Activated CD4-positive, alpha-beta T cell treated with anti-CD3 and anti-CD28 coated beads for 36 hours (primary cell): ENCODE measurements at regions of chr13 and their contacts with region 1.

Region 1: GRCh38 chr13:96762876-96763275 is 231.4 kb downstream of the OXGR1 start:
- DNase-seq: no peak
- ATAC-seq: no peak
- H3K4me3 Mint-ChIP-seq: no peak overlapping the region
- H3K27ac Mint-ChIP-seq: no peak overlapping the region
- H3K4me1 Mint-ChIP-seq: no peaks in the 10 kb centered on the region
- H3K27me3 Mint-ChIP-seq: no peaks in the 10 kb centered on the region

Region 2: GRCh38 chr13:95698047-95698749 is 1064.7 kb before region 1 on chr13:
- CTCF ChIA-PET with region 1: no interaction called
- POLR2A ChIA-PET with region 1: no interaction called
- intact Hi-C with region 1: no loop called
- DNase-seq: no peak
- ATAC-seq: peak; percentile 51
- H3K4me3 Mint-ChIP-seq: no peak overlapping the region
- H3K27ac Mint-ChIP-seq: peak overlapping the region; percentile 27
- H3K4me1 Mint-ChIP-seq: peaks cover 49% of the 10 kb centered on the region
- H3K27me3 Mint-ChIP-seq: no peaks in the 10 kb centered on the region

Region 3: DNA sequence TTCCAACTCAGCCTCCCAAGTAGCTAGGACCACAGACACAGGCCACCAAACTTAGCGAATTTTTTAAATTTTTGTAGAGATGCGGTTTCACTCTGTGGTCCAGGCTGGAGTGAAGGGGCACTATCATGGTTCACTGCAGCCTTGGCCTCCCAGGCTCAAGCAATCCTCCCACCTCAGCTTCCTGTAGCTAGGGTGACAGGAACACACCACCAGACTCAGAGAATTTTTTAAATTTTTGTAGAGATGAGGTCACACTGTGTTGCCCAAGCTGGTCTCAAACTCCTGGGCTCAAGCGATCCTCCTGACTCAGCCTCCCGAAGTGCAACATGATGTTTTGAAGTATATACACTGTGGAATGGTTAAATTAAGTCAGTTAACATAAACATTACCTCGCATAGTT is 32.2 kb before region 1 on chr13:
- CTCF ChIA-PET with region 1: no interaction called
- POLR2A ChIA-PET with region 1: no interaction called
- intact Hi-C with region 1: no loop called
- DNase-seq: no peak
- ATAC-seq: no peak
- H3K4me3 Mint-ChIP-seq: no peak overlapping the region
- H3K27ac Mint-ChIP-seq: no peak overlapping the region
- H3K4me1 Mint-ChIP-seq: no peaks in the 10 kb centered on the region
- H3K27me3 Mint-ChIP-seq: no peaks in the 10 kb centered on the region

Region 4: DNA sequence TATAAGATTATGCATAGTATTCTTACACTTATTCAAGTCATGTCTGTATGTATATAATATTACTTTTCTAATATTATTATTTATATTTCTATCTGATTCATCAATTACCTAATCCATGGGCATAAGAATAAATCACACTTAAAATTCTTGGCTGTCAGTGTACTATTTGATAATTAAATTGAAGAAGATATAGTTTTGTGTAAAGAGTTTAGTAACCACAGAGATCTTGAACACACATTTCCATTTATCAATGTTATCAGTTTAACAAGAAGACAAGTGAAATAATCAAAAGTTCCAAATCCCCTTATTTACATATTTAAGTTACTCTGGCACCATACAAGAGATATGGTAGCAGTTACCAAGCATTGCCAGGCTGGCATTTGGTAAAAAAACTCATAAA is 13.1 kb before region 1 on chr13:
- CTCF ChIA-PET with region 1: interaction called, 3 read pairs
- POLR2A ChIA-PET with region 1: no interaction called
- intact Hi-C with region 1: loop called in 1 of 2 experiments (anchors 1 kb)
- DNase-seq: no peak
- ATAC-seq: no peak
- H3K4me3 Mint-ChIP-seq: no peak overlapping the region
- H3K27ac Mint-ChIP-seq: no peak overlapping the region
- H3K4me1 Mint-ChIP-seq: no peaks in the 10 kb centered on the region
- H3K27me3 Mint-ChIP-seq: no peaks in the 10 kb centered on the region

Region 5: DNA sequence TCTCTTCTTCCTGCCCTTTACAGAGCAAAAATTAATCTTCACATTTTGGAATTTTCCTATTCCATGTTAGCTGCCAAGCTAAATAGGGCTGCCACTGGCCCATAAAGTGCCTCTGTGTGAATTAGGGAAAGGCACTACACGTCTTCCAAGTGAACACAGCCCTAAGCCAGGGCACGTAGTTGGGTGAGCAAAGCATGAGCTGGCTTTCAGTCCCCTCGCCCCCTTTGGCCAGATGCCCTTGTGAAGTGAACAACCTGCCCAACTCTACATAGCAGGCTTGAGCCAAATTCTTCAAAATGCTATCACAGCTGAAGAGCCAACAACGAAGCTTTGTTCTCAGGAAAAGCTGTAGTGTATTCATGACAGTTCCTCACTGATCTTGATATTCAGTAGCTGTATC is 18.3 kb after region 1 on chr13:
- CTCF ChIA-PET with region 1: no interaction called
- POLR2A ChIA-PET with region 1: no interaction called
- intact Hi-C with region 1: no loop called
- DNase-seq: no peak
- ATAC-seq: no peak
- H3K4me3 Mint-ChIP-seq: no peak overlapping the region
- H3K27ac Mint-ChIP-seq: no peak overlapping the region
- H3K4me1 Mint-ChIP-seq: no peaks in the 10 kb centered on the region
- H3K27me3 Mint-ChIP-seq: no peaks in the 10 kb centered on the region

Region 6: GRCh38 chr13:96822895-96823294 is 60.0 kb after region 1 on chr13:
- CTCF ChIA-PET with region 1: no interaction called
- POLR2A ChIA-PET with region 1: no interaction called
- intact Hi-C with region 1: no loop called
- DNase-seq: peak; percentile 20
- ATAC-seq: no peak
- H3K4me3 Mint-ChIP-seq: no peak overlapping the region
- H3K27ac Mint-ChIP-seq: no peak overlapping the region
- H3K4me1 Mint-ChIP-seq: peaks cover 2% of the 10 kb centered on the region
- H3K27me3 Mint-ChIP-seq: no peaks in the 10 kb centered on the region